Activated B cell treated with CpG ODN at 0.5 μM for 24 hours (primary cell): ENCODE measurements at regions of chr16 and their contacts with region 1.

Region 1: DNA sequence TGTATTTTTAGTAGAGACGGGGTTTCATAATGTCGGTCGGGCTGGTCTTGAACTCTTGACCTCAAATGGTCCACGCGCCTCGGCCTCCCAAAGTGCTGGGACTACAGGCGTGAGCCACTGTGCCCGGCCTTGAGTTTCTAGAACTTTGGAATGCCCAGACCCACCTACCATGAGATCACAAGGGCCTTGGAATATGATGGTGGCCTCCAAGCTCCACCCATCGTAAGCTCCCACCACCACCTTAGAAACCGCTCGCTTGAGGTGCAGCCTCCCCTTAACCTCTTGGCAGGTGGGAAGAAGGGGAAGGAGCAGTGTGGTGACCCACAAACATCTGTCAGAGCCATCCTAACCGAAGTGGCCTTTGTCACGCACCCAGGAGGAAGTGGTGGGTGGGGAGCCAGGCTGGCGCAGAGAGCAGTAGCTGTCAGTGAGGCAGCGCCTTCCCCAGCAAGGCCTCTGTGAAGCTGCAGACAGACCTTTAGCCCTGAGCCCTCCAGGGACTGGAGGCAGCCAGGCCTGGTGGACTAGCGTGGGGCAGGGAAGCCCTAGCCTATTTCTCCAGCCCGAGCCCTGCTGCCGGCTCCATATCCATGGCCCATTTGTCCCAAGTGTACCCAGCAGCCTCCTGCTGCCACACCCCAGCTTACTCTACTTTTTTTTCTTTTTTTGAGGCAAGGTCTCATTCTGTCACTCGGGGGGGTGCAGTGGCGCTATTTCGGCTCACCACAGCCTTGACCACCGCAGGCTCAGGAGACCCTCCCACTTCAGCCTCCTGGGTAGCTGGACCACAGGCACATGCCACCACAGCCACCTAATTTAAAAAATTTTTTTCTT is 13.1 kb upstream of the SEPHS2 start:
- DNase-seq: peak; percentile 69
- ATAC-seq: peak; percentile 92
- H3K4me3 Mint-ChIP-seq: peak overlapping the region; percentile 66
- H3K27ac Mint-ChIP-seq: peak overlapping the region; percentile 96
- H3K4me1 Mint-ChIP-seq: peaks cover 65% of the 10 kb centered on the region
- H3K27me3 Mint-ChIP-seq: no peaks in the 10 kb centered on the region
- CTCF ChIP-seq: no peak

Region 2: GRCh38 chr16:30395155-30395991 is 63.4 kb before region 1 on chr16 and contains the start of gene ZNF48:
- CTCF ChIA-PET with region 1: no interaction called
- POLR2A ChIA-PET with region 1: no interaction called
- intact Hi-C with region 1: no loop called
- DNase-seq: peak; percentile 77
- ATAC-seq: peak; percentile 96
- H3K4me3 Mint-ChIP-seq: peak within 1 kb of the TSS; percentile 91
- H3K27ac Mint-ChIP-seq: peak within 1 kb of the TSS; percentile 78
- H3K4me1 Mint-ChIP-seq: peaks cover 31% of the 10 kb centered on the region
- H3K27me3 Mint-ChIP-seq: no peaks in the 10 kb centered on the region
- CTCF ChIP-seq: no peak
- total RNA-seq, gene ZNF48: 11.7 and 13.0 TPM in 2 replicates

Region 3: DNA sequence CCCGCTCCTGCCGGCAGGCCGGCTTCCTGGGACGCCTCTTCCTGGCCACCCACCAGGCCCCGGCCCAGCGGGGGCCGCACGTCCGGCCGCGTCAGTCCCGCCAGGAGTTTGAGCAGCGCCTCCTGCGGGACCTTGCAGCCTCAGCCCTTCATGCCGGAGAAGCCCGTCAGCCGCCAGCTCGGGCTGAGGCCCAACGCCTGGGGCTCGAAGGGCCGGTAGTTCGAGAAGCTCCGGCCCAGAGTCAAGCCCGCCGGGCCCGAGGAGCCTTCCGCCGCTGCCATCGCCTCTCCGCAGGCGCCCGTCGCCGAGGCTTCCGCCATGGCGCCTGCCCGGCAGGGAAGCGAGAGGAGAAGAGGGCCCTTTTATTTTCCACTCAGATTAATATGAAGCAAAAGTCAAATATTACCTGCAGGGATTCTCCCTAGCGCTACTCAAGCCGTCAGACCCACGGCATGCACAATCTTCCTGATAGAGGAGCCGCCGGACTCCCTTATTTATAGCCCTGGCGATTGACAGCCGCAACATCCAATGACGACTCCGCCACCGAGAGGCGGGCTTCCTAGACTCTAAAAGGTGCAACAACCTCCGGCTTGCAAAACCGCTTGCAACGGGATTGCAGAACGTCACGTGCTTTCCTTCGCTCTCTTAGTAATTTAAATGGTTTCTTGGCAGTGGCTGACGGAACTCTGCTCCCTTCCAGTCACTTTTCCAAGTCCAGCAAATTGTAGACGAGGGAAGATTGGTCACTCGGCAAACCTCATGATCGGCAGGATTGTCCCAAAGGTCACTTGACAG is 13.2 kb before region 1 on chr16 and contains the start of gene SEPHS2:
- CTCF ChIA-PET with region 1: interaction called, 14 read pairs
- POLR2A ChIA-PET with region 1: interaction called, 20 read pairs
- intact Hi-C with region 1: no loop called
- DNase-seq: peak; percentile 87
- ATAC-seq: peak; percentile 96
- H3K4me3 Mint-ChIP-seq: peak within 1 kb of the TSS; percentile 95
- H3K27ac Mint-ChIP-seq: peak within 1 kb of the TSS; percentile 96
- H3K4me1 Mint-ChIP-seq: peaks cover 45% of the 10 kb centered on the region
- H3K27me3 Mint-ChIP-seq: no peaks in the 10 kb centered on the region
- CTCF ChIP-seq: no peak
- total RNA-seq, gene SEPHS2: 79.1 and 80.0 TPM in 2 replicates

Region 4: DNA sequence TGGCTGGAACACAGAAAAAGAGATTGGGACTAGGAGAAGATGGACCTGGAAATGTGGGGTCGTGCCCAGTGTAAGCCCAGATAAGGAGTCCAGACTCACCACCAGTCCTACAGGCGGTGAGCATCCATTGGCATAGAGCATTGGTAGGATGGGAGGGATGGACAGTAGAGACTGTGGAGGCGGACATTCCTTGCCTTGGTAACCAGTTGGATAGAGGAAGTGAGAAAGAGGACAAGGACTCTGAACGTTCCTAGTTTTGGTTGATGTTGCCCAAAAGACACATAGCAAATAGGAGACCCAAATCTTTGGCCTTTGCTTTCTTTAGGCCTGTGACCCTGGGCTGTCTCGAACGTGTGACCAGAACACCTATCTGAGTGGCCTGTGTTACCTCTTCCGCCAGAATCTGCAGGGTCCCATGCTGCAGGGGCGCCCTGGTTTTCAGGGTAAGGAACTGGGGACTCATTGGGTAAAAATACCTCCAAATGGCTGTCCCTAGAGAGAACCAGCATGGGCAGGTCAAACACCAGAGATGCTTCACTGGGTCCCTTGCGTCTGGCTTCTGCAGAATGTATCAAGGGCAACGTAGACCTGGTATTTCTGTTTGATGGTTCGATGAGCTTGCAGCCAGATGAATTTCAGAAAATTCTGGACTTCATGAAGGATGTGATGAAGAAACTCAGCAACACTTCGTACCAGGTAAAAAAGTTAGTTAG is 20.1 kb after region 1 on chr16:
- CTCF ChIA-PET with region 1: interaction called, 3 read pairs
- POLR2A ChIA-PET with region 1: interaction called, 421 read pairs
- intact Hi-C with region 1: no loop called
- DNase-seq: no peak
- ATAC-seq: peak; percentile 61
- H3K4me3 Mint-ChIP-seq: peak overlapping the region; percentile 12
- H3K27ac Mint-ChIP-seq: peak overlapping the region; percentile 50
- H3K4me1 Mint-ChIP-seq: peaks cover 39% of the 10 kb centered on the region
- H3K27me3 Mint-ChIP-seq: no peaks in the 10 kb centered on the region
- CTCF ChIP-seq: no peak

Region 5: DNA sequence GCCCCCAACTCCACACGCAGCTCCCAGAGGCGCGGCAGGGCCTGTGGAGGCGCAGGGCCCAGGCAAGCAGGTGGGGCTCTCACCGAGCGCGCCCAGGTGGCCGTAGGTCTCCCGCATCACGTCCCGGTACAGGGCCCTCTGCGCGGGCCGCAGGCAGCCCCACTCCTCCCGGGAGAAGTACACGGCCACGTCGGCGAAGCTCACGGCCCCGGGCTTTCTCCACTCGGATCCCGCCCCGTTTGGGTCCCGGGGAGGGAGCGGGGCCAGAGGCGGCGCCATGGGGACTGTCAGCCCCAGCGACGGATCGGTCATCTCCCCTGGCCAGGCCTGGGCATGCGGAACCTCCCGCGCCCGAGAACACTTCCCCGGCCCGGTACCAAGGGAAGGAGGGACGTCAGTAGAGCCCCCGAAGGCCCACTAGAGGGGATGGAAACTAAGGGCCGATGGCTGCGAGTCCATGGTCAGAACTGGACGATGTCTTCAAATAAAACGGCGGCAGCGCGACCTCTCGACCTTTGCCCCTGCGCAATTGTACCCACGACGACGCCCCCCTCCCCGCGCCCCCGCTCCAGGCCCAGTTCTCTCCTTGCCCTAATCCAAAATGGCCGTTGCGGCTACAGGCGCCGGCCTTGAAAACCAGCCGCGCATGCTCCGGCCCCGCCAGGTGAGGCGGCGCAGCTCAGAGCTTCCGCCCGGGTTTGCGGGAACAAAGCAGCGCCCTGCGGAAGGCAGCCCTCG is 75.8 kb after region 1 on chr16 and contains the start of gene ZNF747:
- CTCF ChIA-PET with region 1: interaction called, 10 read pairs
- POLR2A ChIA-PET with region 1: interaction called, 20 read pairs
- intact Hi-C with region 1: no loop called
- DNase-seq: peak; percentile 85
- ATAC-seq: peak; percentile 83
- H3K4me3 Mint-ChIP-seq: peak within 1 kb of the TSS; percentile 96
- H3K27ac Mint-ChIP-seq: peak within 1 kb of the TSS; percentile 97
- H3K4me1 Mint-ChIP-seq: peaks cover 23% of the 10 kb centered on the region
- H3K27me3 Mint-ChIP-seq: no peaks in the 10 kb centered on the region
- CTCF ChIP-seq: no peak
- total RNA-seq, gene ZNF747: 16.3 and 21.6 TPM in 2 replicates

Region 6: GRCh38 chr16:30637942-30638341 is 179.2 kb after region 1 on chr16:
- CTCF ChIA-PET with region 1: no interaction called
- POLR2A ChIA-PET with region 1: interaction called, 14 read pairs
- intact Hi-C with region 1: no loop called
- DNase-seq: no peak
- ATAC-seq: no peak
- H3K4me3 Mint-ChIP-seq: no peak overlapping the region
- H3K27ac Mint-ChIP-seq: no peak overlapping the region
- H3K4me1 Mint-ChIP-seq: peaks cover 21% of the 10 kb centered on the region
- H3K27me3 Mint-ChIP-seq: no peaks in the 10 kb centered on the region
- CTCF ChIP-seq: no peak